CD4-positive, alpha-beta memory T cell (primary cell): ENCODE measurements at regions of chr6 and their contacts with region 1.

Region 1: GRCh38 chr6:35601331-35602132 is 87.2 kb downstream of the FKBP5 start:
- DNase-seq: peak; percentile 88 to 93 (median 89)
- H3K4me3 ChIP-seq: peak overlapping the region; percentile 33 to 47
- H3K4me3 Mint-ChIP-seq: peak overlapping the region; percentile 66 to 91 (median 86)
- H3K27ac ChIP-seq: peak overlapping the region; percentile 71
- H3K27ac Mint-ChIP-seq: peak overlapping the region; percentile 79 to 97 (median 92)
- H3K4me1 ChIP-seq: peaks cover 97% of the 10 kb centered on the region
- H3K4me1 Mint-ChIP-seq: peaks cover 55 to 79% (median 67%) of the 10 kb centered on the region in 4 donors
- H3K27me3 ChIP-seq: no peaks in the 10 kb centered on the region
- H3K27me3 Mint-ChIP-seq: no peaks in the 10 kb centered on the region

Region 2: GRCh38 chr6:33983105-33983716 is 1618.3 kb before region 1 on chr6:
- CTCF ChIA-PET with region 1: no interaction called
- POLR2A ChIA-PET with region 1: no interaction called
- intact Hi-C with region 1: no loop called
- DNase-seq: no peak
- H3K4me3 ChIP-seq: no peak overlapping the region
- H3K4me3 Mint-ChIP-seq: no peak overlapping the region
- H3K27ac ChIP-seq: no peak overlapping the region
- H3K27ac Mint-ChIP-seq: no peak overlapping the region
- H3K4me1 ChIP-seq: no peaks in the 10 kb centered on the region
- H3K4me1 Mint-ChIP-seq: peaks cover 0 to 2% (median under 1%) of the 10 kb centered on the region in 4 donors
- H3K27me3 ChIP-seq: no peaks in the 10 kb centered on the region
- H3K27me3 Mint-ChIP-seq: peaks cover 2 to 4% of the 10 kb centered on the region in 2 donors

Region 3: DNA sequence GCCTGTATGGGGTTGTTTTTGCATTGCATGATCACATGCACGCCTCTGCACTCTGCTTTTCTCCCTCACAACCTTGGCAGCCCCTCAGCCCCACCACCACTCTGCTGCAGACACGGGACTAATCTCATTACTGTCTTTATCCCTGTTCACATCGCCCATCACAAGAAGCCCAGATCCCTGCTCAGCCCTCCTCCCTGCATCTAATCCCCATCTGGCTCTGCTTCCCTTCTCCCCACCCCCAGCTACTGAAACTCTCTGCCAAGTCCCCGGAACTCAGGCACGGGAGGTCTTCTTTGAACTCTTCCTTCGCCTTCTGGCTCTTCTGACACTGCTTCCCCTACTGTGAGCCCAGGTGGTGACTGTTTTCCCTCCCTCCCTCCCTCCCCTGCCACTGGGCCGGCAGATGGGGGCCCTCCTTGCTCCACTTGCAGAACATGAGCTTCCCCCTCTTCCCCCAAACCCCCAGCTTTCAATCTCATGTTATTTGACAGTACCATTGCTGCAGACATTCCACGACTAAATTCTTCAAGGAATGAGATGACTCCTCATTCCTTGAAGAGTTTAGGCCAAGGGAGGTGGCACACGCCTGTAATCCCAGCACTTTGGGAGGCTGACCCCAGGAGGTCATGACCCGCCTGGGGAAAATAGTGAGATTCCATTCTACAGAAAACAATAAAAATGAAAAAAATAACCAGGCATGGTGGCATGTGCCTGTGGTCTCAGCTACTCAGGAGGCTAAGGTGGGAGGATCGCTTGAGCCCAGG is 66.9 kb before region 1 on chr6:
- CTCF ChIA-PET with region 1: no interaction called
- POLR2A ChIA-PET with region 1: no interaction called
- intact Hi-C with region 1: no loop called
- DNase-seq: no peak
- H3K4me3 ChIP-seq: no peak overlapping the region
- H3K4me3 Mint-ChIP-seq: no peak overlapping the region
- H3K27ac ChIP-seq: no peak overlapping the region
- H3K27ac Mint-ChIP-seq: no peak overlapping the region
- H3K4me1 ChIP-seq: no peaks in the 10 kb centered on the region
- H3K4me1 Mint-ChIP-seq: peaks cover 1 to 8% (median 6%) of the 10 kb centered on the region in 4 donors
- H3K27me3 ChIP-seq: no peaks in the 10 kb centered on the region
- H3K27me3 Mint-ChIP-seq: peaks cover 6 to 9% of the 10 kb centered on the region in 2 donors

Region 4: DNA sequence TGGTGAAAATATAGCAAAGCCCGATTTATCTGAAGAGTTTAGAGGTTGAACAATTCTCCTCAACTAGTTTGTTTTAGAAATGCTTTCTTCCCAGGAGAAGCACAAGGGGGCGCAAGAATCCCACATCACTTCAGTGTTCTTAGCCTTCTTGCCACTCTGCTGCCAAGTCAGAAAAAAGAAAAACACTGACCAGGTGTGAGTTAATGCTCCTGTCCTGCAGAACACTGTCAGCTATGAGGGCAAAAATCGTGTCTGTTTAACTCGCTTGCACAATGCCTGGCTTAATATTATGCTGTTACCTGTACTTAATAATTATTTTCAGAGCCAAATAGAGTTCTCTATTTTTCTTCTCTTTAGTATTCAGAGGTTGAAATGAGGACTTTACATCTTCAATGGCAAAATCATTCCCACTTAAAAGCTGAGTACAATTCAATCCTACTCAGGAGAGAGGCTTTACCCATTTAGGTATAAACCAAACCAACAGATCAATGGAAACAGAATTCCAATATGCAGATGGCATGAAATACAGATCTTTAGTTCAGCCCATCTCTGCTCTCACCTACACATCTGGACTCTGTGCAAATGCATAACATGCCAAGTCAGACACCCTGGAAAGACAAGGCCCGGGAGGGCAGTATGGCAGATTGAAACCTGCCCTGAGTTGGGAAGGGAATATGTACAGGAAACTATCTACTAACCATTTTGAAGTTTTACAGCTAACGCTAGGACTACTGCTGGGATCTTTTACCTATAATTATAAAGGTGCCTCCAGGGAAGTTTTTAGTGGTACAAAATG is 17.4 kb before region 1 on chr6:
- CTCF ChIA-PET with region 1: interaction called, 81 read pairs
- POLR2A ChIA-PET with region 1: interaction called, 268 read pairs
- intact Hi-C with region 1: loop called (anchors 1 kb)
- DNase-seq: peak; percentile 73 to 78 (median 76)
- H3K4me3 ChIP-seq: no peak overlapping the region
- H3K4me3 Mint-ChIP-seq: peak overlapping the region in 5 of 8 donors; percentile 17 to 63 (median 46)
- H3K27ac ChIP-seq: peak overlapping the region; percentile 12
- H3K27ac Mint-ChIP-seq: peak overlapping the region; percentile 39 to 89 (median 83)
- H3K4me1 ChIP-seq: peaks cover 45% of the 10 kb centered on the region
- H3K4me1 Mint-ChIP-seq: peaks cover 47 to 59% (median 50%) of the 10 kb centered on the region in 4 donors
- H3K27me3 ChIP-seq: no peaks in the 10 kb centered on the region
- H3K27me3 Mint-ChIP-seq: no peaks in the 10 kb centered on the region

Region 5: DNA sequence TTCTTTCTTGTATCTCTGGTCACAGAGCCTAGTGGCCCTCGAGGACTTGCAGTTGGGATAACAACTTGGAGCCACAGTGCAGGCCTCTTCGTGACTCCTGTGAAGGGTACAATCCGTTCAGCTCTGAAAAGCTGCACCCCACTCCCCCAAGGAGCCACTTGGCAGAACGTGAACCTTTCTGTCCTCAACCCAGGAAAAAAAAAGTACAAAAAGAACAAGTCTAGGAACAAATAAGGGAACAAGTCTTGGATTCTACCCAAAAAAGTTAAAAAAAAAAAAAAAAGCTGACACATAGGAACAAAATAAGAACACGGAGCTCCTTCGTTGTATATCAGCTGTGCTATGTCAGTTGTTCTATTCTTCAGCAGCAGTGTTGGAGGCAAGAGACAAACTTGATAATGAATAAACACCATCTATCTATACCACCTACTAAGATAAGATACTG is 10.9 kb before region 1 on chr6:
- CTCF ChIA-PET with region 1: interaction called, 81 read pairs
- POLR2A ChIA-PET with region 1: interaction called, 268 read pairs
- intact Hi-C with region 1: loop called (anchors 1 kb)
- DNase-seq: no peak
- H3K4me3 ChIP-seq: no peak overlapping the region
- H3K4me3 Mint-ChIP-seq: peak overlapping the region in 2 of 8 donors; percentile 48 to 68
- H3K27ac ChIP-seq: no peak overlapping the region
- H3K27ac Mint-ChIP-seq: peak overlapping the region in 6 of 7 donors; percentile 52 to 90 (median 82)
- H3K4me1 ChIP-seq: peaks cover 86% of the 10 kb centered on the region
- H3K4me1 Mint-ChIP-seq: peaks cover 63 to 90% (median 76%) of the 10 kb centered on the region in 4 donors
- H3K27me3 ChIP-seq: no peaks in the 10 kb centered on the region
- H3K27me3 Mint-ChIP-seq: no peaks in the 10 kb centered on the region

Region 6: GRCh38 chr6:35640017-35640664 is 38.6 kb after region 1 on chr6:
- CTCF ChIA-PET with region 1: no interaction called
- POLR2A ChIA-PET with region 1: interaction called, 12 read pairs
- intact Hi-C with region 1: no loop called
- DNase-seq: no peak
- H3K4me3 ChIP-seq: no peak overlapping the region
- H3K4me3 Mint-ChIP-seq: no peak overlapping the region
- H3K27ac ChIP-seq: no peak overlapping the region
- H3K27ac Mint-ChIP-seq: peak overlapping the region in 4 of 7 donors; percentile 7 to 78 (median 28)
- H3K4me1 ChIP-seq: peaks cover 64% of the 10 kb centered on the region
- H3K4me1 Mint-ChIP-seq: peaks cover 35 to 71% (median 60%) of the 10 kb centered on the region in 4 donors
- H3K27me3 ChIP-seq: no peaks in the 10 kb centered on the region
- H3K27me3 Mint-ChIP-seq: no peaks in the 10 kb centered on the region

Region 7: DNA sequence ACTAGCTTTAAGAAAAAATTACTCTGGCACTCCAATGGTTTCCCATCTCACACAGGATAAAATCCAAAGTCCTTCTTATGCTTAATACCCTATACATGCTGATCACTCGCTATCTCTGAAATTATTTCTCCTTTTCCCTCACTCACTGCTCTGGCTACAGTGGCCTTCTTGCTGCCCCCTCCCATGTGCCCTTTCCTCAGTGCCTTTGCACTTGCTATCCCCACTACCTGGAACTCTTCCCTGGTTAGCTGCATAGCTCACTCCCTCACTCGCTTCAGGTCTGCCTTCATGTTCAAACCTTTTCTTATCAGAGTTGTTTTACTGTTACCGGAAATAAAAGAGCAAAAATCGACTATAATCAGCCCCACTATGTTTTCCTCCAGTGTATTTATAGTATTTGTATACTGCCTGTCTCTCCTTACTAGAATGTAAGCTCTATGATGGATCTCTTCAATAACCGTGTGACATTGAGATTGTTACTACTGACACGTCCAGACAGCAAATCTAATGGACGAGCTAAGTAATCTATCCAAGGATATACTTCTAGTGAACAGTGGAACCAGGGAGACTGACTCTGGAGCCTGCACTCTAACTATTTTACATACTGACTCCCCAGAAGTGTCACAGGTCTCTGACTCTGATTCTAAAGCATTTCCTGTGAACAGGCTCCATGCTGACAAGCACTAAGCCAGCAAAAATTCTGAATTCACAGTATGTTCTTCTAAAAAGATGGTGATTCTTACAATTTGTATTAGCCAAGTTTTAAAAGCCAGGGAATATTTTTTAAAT is 62.1 kb after region 1 on chr6:
- CTCF ChIA-PET with region 1: interaction called, 4 read pairs
- POLR2A ChIA-PET with region 1: interaction called, 12 read pairs
- intact Hi-C with region 1: no loop called
- DNase-seq: no peak
- H3K4me3 ChIP-seq: peak overlapping the region in 1 of 2 donors; percentile 6
- H3K4me3 Mint-ChIP-seq: no peak overlapping the region
- H3K27ac ChIP-seq: peak overlapping the region; percentile 50
- H3K27ac Mint-ChIP-seq: no peak overlapping the region
- H3K4me1 ChIP-seq: peaks cover 66% of the 10 kb centered on the region
- H3K4me1 Mint-ChIP-seq: peaks cover 12 to 20% (median 17%) of the 10 kb centered on the region in 4 donors
- H3K27me3 ChIP-seq: no peaks in the 10 kb centered on the region
- H3K27me3 Mint-ChIP-seq: no peaks in the 10 kb centered on the region

Region 8: GRCh38 chr6:35669451-35670045 is 68.0 kb after region 1 on chr6:
- CTCF ChIA-PET with region 1: interaction called, 4 read pairs
- POLR2A ChIA-PET with region 1: interaction called, 12 read pairs
- intact Hi-C with region 1: no loop called
- DNase-seq: peak in 3 of 5 donors; percentile 25 to 47 (median 26)
- H3K4me3 ChIP-seq: peak overlapping the region; percentile 1 to 12
- H3K4me3 Mint-ChIP-seq: peak overlapping the region; percentile 57 to 92 (median 82)
- H3K27ac ChIP-seq: peak overlapping the region; percentile 52
- H3K27ac Mint-ChIP-seq: peak overlapping the region; percentile 76 to 96 (median 89)
- H3K4me1 ChIP-seq: peaks cover 89% of the 10 kb centered on the region
- H3K4me1 Mint-ChIP-seq: peaks cover 30 to 56% (median 37%) of the 10 kb centered on the region in 4 donors
- H3K27me3 ChIP-seq: no peaks in the 10 kb centered on the region
- H3K27me3 Mint-ChIP-seq: no peaks in the 10 kb centered on the region

Region 9: DNA sequence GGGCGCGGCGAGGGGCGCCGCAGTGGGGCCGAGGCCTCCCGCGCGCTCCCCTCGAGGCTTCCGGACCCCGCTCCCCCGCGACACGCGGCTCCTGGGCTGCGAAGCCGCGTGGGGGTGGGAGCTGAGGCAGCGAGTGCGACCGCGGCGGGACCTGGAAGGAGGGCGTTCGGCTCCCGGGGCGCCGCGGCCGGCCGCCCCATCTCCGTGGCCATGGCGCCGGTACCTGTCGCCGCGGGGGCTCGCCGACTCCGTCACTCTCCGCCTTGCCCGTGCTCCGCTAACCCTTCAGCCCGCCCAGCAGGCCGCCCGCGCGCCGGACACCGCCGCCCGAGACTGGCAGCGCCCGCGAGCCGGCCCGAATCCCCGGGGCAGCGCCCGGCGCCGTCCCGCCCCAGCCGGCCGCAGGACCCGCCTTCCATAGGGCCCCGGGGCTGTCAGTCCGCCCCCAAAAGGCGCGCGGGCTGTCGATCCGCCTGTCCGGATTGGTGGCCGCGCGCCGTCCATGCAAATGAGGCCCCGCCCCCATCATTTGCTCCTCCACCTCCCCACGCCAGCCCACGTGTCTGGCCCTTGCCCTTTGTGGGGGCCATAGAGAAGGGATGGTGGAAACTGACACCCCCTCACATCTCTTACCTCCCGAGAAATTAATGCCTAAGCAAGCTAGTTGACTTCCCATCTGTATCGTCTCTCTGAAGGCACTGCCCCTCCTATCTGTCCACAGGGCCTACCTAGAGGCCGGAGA is 87.2 kb after region 1 on chr6 and contains the start of gene FKBP5:
- CTCF ChIA-PET with region 1: interaction called, 3 read pairs
- POLR2A ChIA-PET with region 1: interaction called, 20 read pairs
- intact Hi-C with region 1: no loop called
- DNase-seq: peak; percentile 83 to 87 (median 85)
- H3K4me3 ChIP-seq: peak within 1 kb of the TSS; percentile 51 to 99
- H3K4me3 Mint-ChIP-seq: peak within 1 kb of the TSS; percentile 96 to 100 (median 100)
- H3K27ac ChIP-seq: peak within 1 kb of the TSS; percentile 85
- H3K27ac Mint-ChIP-seq: peak within 1 kb of the TSS; percentile 93 to 98 (median 95)
- H3K4me1 ChIP-seq: peaks cover 22% of the 10 kb centered on the region
- H3K4me1 Mint-ChIP-seq: peaks cover 4 to 30% (median 10%) of the 10 kb centered on the region in 4 donors
- H3K27me3 ChIP-seq: no peaks in the 10 kb centered on the region
- H3K27me3 Mint-ChIP-seq: no peaks in the 10 kb centered on the region
- total RNA-seq, gene FKBP5: 72.9 to 74.2 TPM